ENCODE measurements at regions of chr12 and their contacts with region 1.

Region 1: DNA sequence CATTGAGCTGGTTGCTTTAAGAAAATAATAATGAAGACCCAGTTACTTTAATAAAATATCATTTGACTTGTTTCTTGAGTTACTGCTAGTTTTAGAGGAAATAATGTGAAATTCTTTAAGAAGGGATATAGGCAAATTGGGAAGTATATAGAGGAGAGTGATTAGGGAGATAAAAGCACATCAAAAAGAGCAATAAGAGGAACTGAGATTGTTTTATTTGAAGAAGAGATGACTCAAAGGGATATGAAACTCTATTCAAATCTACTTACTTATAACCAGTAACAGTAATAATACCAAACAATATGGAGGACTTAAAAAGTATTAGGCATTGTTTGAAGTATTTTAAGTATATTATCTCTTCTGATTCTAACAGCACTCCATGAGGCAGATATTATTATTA is 37.1 kb downstream of the LRRK2 start:
- DNase-seq: no peak
- ATAC-seq: peak; percentile 73
- H3K4me3 Mint-ChIP-seq: peak overlapping the region; percentile 75
- H3K27ac Mint-ChIP-seq: peak overlapping the region; percentile 92
- H3K4me1 Mint-ChIP-seq: peaks cover 41% of the 10 kb centered on the region
- H3K27me3 Mint-ChIP-seq: no peaks in the 10 kb centered on the region
- CTCF ChIP-seq: no peak

Region 2: DNA sequence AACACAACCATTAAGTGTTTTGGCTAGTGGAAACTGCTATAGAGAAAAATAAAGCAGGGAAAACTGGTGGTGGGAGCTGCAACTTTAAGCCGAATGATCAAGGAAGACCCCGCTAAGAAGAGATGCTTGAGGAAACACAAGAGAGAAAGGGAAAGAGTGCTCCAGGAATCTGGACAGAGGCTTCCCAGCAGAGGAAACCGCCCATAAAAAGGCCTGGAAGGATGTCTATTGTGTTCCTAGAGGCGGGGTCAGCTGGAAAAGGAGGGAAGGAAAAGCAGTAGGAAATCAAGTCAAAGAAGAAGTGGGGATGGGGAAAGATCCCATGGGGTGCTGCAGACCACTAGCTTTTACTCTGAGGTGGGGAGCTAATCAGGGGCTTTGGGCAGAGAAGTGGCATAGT is 168.4 kb before region 1 on chr12:
- CTCF ChIA-PET with region 1: no interaction called
- POLR2A ChIA-PET with region 1: no interaction called
- intact Hi-C with region 1: no loop called
- DNase-seq: no peak
- ATAC-seq: no peak
- H3K4me3 Mint-ChIP-seq: no peak overlapping the region
- H3K27ac Mint-ChIP-seq: no peak overlapping the region
- H3K4me1 Mint-ChIP-seq: no peaks in the 10 kb centered on the region
- H3K27me3 Mint-ChIP-seq: no peaks in the 10 kb centered on the region
- CTCF ChIP-seq: no peak

Region 3: DNA sequence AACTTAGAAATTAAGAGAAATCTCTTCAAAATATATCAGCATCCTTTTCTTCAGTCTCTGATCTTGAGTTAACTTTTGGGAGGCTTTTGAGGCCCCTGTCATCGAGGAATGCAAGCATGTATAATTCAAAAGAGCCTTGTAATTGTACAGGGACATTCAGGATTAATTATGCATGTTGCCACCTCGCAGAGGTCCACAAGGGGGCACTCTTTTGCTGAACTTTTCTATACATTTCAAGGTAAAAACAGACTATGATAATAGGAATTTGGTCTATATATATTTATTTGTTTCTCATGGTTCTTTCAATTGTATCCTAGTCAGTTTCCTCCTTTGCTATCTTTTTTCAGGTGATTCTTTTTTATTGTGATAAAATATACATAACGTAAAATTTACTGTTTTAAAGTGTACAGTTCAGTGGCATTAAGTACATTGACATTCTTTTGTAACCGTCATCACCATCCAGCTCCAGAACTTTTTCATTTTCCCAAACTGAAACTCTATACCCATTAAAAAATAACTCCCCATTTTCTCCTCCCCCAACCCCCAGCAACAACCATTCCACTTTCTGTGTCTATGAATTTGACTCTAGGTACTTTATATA is 109.1 kb before region 1 on chr12:
- CTCF ChIA-PET with region 1: interaction called, 3 read pairs
- POLR2A ChIA-PET with region 1: interaction called, 8 read pairs
- intact Hi-C with region 1: loop called (anchors 1 kb)
- DNase-seq: peak; percentile 33
- ATAC-seq: peak; percentile 56
- H3K4me3 Mint-ChIP-seq: no peak overlapping the region
- H3K27ac Mint-ChIP-seq: peak overlapping the region; percentile 3
- H3K4me1 Mint-ChIP-seq: peaks cover 52% of the 10 kb centered on the region
- H3K27me3 Mint-ChIP-seq: no peaks in the 10 kb centered on the region
- CTCF ChIP-seq: peak; percentile 58

Region 4: GRCh38 chr12:40158592-40159111 is 103.3 kb before region 1 on chr12:
- CTCF ChIA-PET with region 1: interaction called, 3 read pairs
- POLR2A ChIA-PET with region 1: interaction called, 8 read pairs
- intact Hi-C with region 1: loop called (anchors 1 kb)
- DNase-seq: no peak
- ATAC-seq: peak; percentile 76
- H3K4me3 Mint-ChIP-seq: peak overlapping the region; percentile 69
- H3K27ac Mint-ChIP-seq: peak overlapping the region; percentile 87
- H3K4me1 Mint-ChIP-seq: peaks cover 56% of the 10 kb centered on the region
- H3K27me3 Mint-ChIP-seq: no peaks in the 10 kb centered on the region
- CTCF ChIP-seq: no peak

Region 5: DNA sequence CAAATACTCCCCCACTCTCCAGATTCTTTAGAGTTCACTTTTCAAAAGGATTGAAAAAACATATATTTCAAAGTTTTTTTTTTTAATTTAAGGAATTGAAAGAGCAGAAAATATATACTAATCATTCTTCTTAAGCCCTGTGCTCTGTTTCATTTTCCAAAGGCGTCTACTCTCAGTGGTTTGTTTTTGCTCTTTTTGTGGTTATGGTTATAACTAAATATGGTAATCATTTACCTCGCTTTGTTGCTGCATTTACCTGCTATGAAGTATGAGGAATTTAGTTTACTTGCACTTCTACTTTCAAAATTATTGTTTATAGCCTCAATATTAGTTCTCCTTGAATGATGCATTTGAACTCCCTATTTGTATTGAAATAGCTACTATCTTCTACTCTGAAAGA is 93.1 kb before region 1 on chr12:
- CTCF ChIA-PET with region 1: no interaction called
- POLR2A ChIA-PET with region 1: interaction called, 3 read pairs
- intact Hi-C with region 1: loop called (anchors 1 kb)
- DNase-seq: no peak
- ATAC-seq: peak; percentile 77
- H3K4me3 Mint-ChIP-seq: peak overlapping the region; percentile 70
- H3K27ac Mint-ChIP-seq: peak overlapping the region; percentile 82
- H3K4me1 Mint-ChIP-seq: peaks cover 34% of the 10 kb centered on the region
- H3K27me3 Mint-ChIP-seq: no peaks in the 10 kb centered on the region
- CTCF ChIP-seq: no peak

Region 6: GRCh38 chr12:40248585-40249297 is 13.2 kb before region 1 on chr12:
- CTCF ChIA-PET with region 1: no interaction called
- POLR2A ChIA-PET with region 1: interaction called, 14 read pairs
- intact Hi-C with region 1: loop called (anchors 1 kb)
- DNase-seq: no peak
- ATAC-seq: peak; percentile 72
- H3K4me3 Mint-ChIP-seq: peak overlapping the region; percentile 72
- H3K27ac Mint-ChIP-seq: peak overlapping the region; percentile 80
- H3K4me1 Mint-ChIP-seq: peaks cover 23% of the 10 kb centered on the region
- H3K27me3 Mint-ChIP-seq: no peaks in the 10 kb centered on the region
- CTCF ChIP-seq: no peak

Measured in activated B cell treated with CpG ODN at 0.5 μM for 24 hours (primary cell).